ENCODE measurements at regions of chr6 and their contacts with region 1.

Region 1: DNA sequence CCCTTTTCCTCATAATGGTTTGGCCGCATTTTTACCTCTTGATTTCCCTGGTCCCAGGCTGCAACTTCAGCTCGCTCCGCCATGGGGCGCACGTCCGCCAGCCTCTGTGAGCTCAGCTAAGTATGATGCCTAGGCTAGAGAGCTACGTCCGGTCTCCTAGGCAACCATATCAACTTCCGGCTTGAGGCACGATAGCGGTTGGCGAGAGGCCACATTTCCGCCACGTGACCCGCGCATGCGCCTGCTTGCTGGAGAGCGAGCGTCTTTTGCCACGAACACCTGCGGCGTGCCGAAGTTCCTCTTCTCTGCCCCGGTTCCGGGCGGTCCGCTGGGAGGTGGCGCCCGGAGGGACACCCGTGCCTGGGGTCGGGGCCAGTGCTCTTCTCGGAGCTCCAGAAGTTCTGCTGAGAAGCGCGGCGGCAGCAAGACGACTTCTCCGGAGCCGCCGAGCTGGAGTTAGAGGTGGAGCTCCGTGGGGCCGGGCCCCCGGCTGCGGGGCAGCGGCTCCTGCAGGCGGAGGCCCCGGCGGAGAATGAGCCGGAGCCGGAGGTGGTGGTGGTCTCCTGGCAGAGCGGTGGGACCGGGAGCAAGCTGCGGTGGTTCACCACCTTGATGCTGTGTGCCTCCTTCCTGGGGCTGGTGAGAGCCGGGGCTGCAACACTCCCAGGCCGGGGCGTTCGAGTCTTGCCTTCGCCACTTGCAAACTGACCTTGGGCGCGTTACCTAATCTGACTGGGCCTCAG is 172.0 kb downstream of the SLC16A10 start:
- DNase-seq: peak; percentile 99
- H3K4me3 Mint-ChIP-seq: peak overlapping the region; percentile 77
- H3K27ac Mint-ChIP-seq: peak overlapping the region; percentile 79
- H3K4me1 Mint-ChIP-seq: peaks cover 34% of the 10 kb centered on the region
- H3K27me3 Mint-ChIP-seq: no peaks in the 10 kb centered on the region

Region 2: DNA sequence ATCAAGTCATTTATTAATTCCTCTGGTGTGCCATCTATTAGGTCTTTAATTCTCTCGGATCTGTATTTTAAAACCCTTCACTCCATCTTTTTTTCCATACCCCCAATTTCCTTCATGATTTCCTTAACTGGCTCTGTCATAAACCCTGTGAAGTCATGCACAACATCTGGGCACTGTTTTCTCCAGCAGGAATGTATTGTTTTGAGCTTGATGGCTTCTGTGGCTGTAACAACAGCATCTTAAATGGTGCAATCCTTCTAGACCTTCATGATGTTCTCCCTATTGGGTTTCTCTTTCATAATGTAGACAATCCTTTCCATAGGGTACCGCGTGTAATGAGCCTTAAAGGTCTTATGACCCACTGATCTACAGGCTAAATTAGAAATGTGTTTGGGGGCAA is 473.0 kb before region 1 on chr6:
- CTCF ChIA-PET with region 1: no interaction called
- intact Hi-C with region 1: no loop called
- DNase-seq: no peak
- H3K4me3 Mint-ChIP-seq: no peak overlapping the region
- H3K27ac Mint-ChIP-seq: no peak overlapping the region
- H3K4me1 Mint-ChIP-seq: peaks cover 23% of the 10 kb centered on the region
- H3K27me3 Mint-ChIP-seq: no peaks in the 10 kb centered on the region

Region 3: GRCh38 chr6:110990840-110991576 is 268.3 kb before region 1 on chr6:
- CTCF ChIA-PET with region 1: no interaction called
- intact Hi-C with region 1: no loop called
- DNase-seq: no peak
- H3K4me3 Mint-ChIP-seq: no peak overlapping the region
- H3K27ac Mint-ChIP-seq: peak overlapping the region; percentile 8
- H3K4me1 Mint-ChIP-seq: peaks cover 16% of the 10 kb centered on the region
- H3K27me3 Mint-ChIP-seq: no peaks in the 10 kb centered on the region

Region 4: GRCh38 chr6:111011360-111012142 is 247.7 kb before region 1 on chr6:
- CTCF ChIA-PET with region 1: interaction called, 3 read pairs
- intact Hi-C with region 1: loop called (anchors 5 kb)
- DNase-seq: no peak
- H3K4me3 Mint-ChIP-seq: no peak overlapping the region
- H3K27ac Mint-ChIP-seq: no peak overlapping the region
- H3K4me1 Mint-ChIP-seq: peaks cover 6% of the 10 kb centered on the region
- H3K27me3 Mint-ChIP-seq: no peaks in the 10 kb centered on the region

Region 5: GRCh38 chr6:111171577-111172400 is 87.5 kb before region 1 on chr6:
- CTCF ChIA-PET with region 1: no interaction called
- intact Hi-C with region 1: no loop called
- DNase-seq: no peak
- H3K4me3 Mint-ChIP-seq: no peak overlapping the region
- H3K27ac Mint-ChIP-seq: no peak overlapping the region
- H3K4me1 Mint-ChIP-seq: peaks cover 27% of the 10 kb centered on the region
- H3K27me3 Mint-ChIP-seq: no peaks in the 10 kb centered on the region

Region 6: DNA sequence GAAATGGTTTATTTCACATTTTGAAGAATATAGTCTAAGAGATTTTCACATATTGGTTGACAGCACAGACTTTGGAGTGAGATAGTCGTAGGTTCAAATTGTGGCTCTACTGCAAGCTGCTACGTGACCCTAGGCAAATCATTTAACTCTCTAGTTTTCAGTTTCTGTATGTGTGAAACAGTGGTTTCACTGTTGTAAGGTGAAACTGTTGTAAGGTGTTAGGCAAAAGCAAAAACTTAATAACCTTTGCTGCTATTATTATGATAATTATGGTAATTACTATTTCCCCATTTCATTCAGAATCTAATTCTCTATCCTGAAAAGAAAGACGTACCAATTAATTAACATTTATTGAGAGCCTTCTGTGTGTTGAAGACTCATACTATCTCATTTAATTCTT is 79.6 kb after region 1 on chr6:
- CTCF ChIA-PET with region 1: interaction called, 4 read pairs
- intact Hi-C with region 1: loop called (anchors 2 kb)
- DNase-seq: no peak
- H3K4me3 Mint-ChIP-seq: no peak overlapping the region
- H3K27ac Mint-ChIP-seq: no peak overlapping the region
- H3K4me1 Mint-ChIP-seq: peaks cover 22% of the 10 kb centered on the region
- H3K27me3 Mint-ChIP-seq: no peaks in the 10 kb centered on the region

Region 7: GRCh38 chr6:111534231-111534751 is 275.0 kb after region 1 on chr6:
- CTCF ChIA-PET with region 1: no interaction called
- intact Hi-C with region 1: loop called (anchors 1 kb)
- DNase-seq: no peak
- H3K4me3 Mint-ChIP-seq: no peak overlapping the region
- H3K27ac Mint-ChIP-seq: no peak overlapping the region
- H3K4me1 Mint-ChIP-seq: peaks cover 30% of the 10 kb centered on the region
- H3K27me3 Mint-ChIP-seq: no peaks in the 10 kb centered on the region

Region 8: GRCh38 chr6:111605100-111605751 is 346.0 kb after region 1 on chr6:
- CTCF ChIA-PET with region 1: interaction called, 9 read pairs
- intact Hi-C with region 1: loop called (anchors 1 kb)
- DNase-seq: peak; percentile 38
- H3K4me3 Mint-ChIP-seq: peak overlapping the region; percentile 82
- H3K27ac Mint-ChIP-seq: peak overlapping the region; percentile 93
- H3K4me1 Mint-ChIP-seq: peaks cover 39% of the 10 kb centered on the region
- H3K27me3 Mint-ChIP-seq: no peaks in the 10 kb centered on the region

Region 9: GRCh38 chr6:111873178-111874024 is 614.1 kb after region 1 on chr6 and contains the start of gene FYN:
- CTCF ChIA-PET with region 1: no interaction called
- intact Hi-C with region 1: loop called (anchors 1 kb)
- DNase-seq: peak; percentile 99
- H3K4me3 Mint-ChIP-seq: peak within 1 kb of the TSS; percentile 96
- H3K27ac Mint-ChIP-seq: peak within 1 kb of the TSS; percentile 97
- H3K4me1 Mint-ChIP-seq: peaks cover 32% of the 10 kb centered on the region
- H3K27me3 Mint-ChIP-seq: no peaks in the 10 kb centered on the region
- total RNA-seq, gene FYN: 236 to 244 TPM

Region 10: DNA sequence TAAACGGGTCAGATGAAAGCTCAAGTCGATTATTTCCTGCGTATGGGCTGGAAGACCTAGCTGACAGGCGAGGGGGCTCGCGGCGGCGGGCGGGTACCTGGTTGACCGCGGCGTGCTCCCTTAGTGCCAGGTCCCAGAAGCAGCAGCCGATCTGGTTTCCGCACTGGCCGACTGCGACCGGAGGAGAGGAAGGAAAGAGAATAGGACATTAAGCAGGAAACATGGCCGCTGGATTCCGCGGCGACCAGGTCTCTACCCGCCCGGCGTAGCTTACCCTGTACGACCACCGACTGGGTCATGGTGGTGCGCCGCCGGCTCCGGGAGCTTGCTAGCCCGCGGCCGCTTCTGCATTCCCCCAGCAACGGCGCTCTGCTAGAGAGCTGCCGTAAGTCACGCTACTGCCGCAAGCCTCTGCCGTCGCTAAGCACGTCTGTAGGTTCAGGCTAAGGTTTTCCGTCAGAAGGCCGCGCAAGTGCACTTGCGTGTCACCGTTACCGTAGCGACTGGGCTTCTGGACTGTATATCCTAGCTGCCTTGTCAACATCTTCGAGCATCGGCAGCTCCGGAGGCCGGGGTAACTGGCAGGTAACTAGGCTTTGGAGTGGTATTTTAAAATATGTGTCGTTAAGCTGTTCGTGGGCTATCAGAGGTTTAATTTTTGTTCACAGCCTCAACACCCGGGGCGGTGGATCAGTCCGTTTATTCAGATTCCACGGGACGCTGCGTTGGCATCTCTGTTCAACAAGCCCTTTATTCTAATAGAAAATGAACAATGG is 828.1 kb after region 1 on chr6 and contains the starts of genes FAM229B and TUBE1:
- CTCF ChIA-PET with region 1: interaction called, 3 read pairs
- intact Hi-C with region 1: loop called (anchors 1 kb)
- DNase-seq: peak; percentile 95
- H3K4me3 Mint-ChIP-seq: no peak within 1 kb of the TSS
- H3K27ac Mint-ChIP-seq: no peak within 1 kb of the TSS
- H3K4me1 Mint-ChIP-seq: peaks cover 7% of the 10 kb centered on the region
- H3K27me3 Mint-ChIP-seq: no peaks in the 10 kb centered on the region
- total RNA-seq, gene FAM229B: 9.5 to 10.2 TPM
- total RNA-seq, gene TUBE1: 53.7 to 62.7 TPM

Measured in activated naive CD4-positive, alpha-beta T cell treated with anti-CD3 and anti-CD28 coated beads for 36 hours (primary cell).